Testis (tissue), 5 donors: ENCODE measurements at regions of chr4 and their contacts with region 1.

Region 1: DNA sequence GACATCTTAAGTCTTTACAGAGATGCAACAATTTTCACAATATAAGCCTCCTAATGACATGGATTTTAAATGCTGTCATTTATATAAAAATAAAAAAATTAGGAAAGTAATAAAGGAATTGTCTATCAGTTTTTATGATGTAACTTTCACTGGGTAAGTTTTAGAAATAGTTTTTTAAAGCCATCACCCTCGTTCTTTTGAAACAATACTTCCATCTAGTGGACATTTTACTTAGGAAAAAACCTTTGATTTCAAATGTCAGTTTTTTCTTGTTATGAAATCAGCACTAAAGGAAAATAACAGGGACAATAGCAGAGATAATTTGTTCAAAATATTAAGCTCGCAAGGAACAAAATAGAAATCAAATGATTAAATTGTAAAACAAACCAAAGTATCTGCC is 24.3 kb upstream of the NDNF start:
- DNase-seq: no peak
- H3K4me3 ChIP-seq: no peak overlapping the region
- H3K27ac ChIP-seq: no peak overlapping the region
- H3K4me1 ChIP-seq: no peaks in the 10 kb centered on the region
- H3K27me3 ChIP-seq: no peaks in the 10 kb centered on the region
- CTCF ChIP-seq: peak in 2 of 3 experiments; percentile 25 to 54
- POLR2A ChIP-seq: no peak

Region 2: DNA sequence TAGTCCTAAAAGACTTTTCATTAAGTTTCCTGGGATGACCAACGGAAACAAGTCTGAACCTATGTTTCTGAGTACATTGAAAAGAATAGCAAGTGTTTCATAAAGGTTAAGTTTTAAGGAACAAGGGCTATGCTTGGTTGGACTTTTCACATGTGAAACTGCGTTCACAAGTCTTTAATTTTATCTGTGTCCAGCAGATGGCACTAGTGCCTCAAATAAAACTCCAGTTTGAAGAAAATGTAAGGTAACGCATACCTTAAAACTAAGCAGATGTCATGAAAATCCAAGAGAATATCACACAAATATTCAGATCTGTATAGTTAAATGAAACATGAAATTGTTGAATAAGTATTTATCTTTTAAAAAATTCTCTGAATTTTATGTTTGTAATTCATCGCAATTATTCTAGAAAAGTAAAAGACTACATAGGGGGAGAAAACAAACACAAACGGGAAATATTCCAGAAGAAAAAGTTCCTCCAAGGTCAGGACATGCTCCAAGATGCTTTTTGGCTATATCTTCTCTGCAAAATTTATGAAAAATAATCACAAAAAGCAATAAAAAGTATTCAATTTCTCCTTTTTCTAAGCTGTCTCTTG is 940.4 kb before region 1 on chr4:
- intact Hi-C with region 1: loop called (anchors 10 kb)
- DNase-seq: peak; percentile 23
- H3K4me3 ChIP-seq: no peak overlapping the region
- H3K27ac ChIP-seq: no peak overlapping the region
- H3K4me1 ChIP-seq: no peaks in the 10 kb centered on the region
- H3K27me3 ChIP-seq: no peaks in the 10 kb centered on the region
- CTCF ChIP-seq: peak; percentile 49 to 65 (median 60)
- POLR2A ChIP-seq: no peak